ENCODE measurements at regions of chr4 and their contacts with region 1.

Region 1: GRCh38 chr4:111854494-111855087 is 290.7 kb upstream of the FAM241A start:
- DNase-seq: no peak
- H3K4me3 Mint-ChIP-seq: no peak overlapping the region
- H3K27ac Mint-ChIP-seq: no peak overlapping the region
- H3K4me1 Mint-ChIP-seq: no peaks in the 10 kb centered on the region
- H3K27me3 Mint-ChIP-seq: peaks cover 4% of the 10 kb centered on the region

Region 2: GRCh38 chr4:109998867-109999584 is 1855.6 kb before region 1 on chr4:
- intact Hi-C with region 1: loop called (anchors 5 kb)
- DNase-seq: peak; percentile 14
- H3K4me3 Mint-ChIP-seq: no peak overlapping the region
- H3K27ac Mint-ChIP-seq: no peak overlapping the region
- H3K4me1 Mint-ChIP-seq: peaks cover 18% of the 10 kb centered on the region
- H3K27me3 Mint-ChIP-seq: peaks cover 4% of the 10 kb centered on the region

Region 3: GRCh38 chr4:111641955-111642579 is 212.5 kb before region 1 on chr4:
- intact Hi-C with region 1: loop called (anchors 1 kb)
- DNase-seq: peak; percentile 11
- H3K4me3 Mint-ChIP-seq: no peak overlapping the region
- H3K27ac Mint-ChIP-seq: no peak overlapping the region
- H3K4me1 Mint-ChIP-seq: no peaks in the 10 kb centered on the region
- H3K27me3 Mint-ChIP-seq: peaks cover 2% of the 10 kb centered on the region

Region 4: GRCh38 chr4:111788099-111788498 is 66.5 kb before region 1 on chr4:
- intact Hi-C with region 1: no loop called
- DNase-seq: no peak
- H3K4me3 Mint-ChIP-seq: no peak overlapping the region
- H3K27ac Mint-ChIP-seq: no peak overlapping the region
- H3K4me1 Mint-ChIP-seq: no peaks in the 10 kb centered on the region
- H3K27me3 Mint-ChIP-seq: no peaks in the 10 kb centered on the region

Region 5: GRCh38 chr4:112031712-112032328 is 177.2 kb after region 1 on chr4:
- intact Hi-C with region 1: loop called (anchors 10 kb)
- DNase-seq: no peak
- H3K4me3 Mint-ChIP-seq: no peak overlapping the region
- H3K27ac Mint-ChIP-seq: no peak overlapping the region
- H3K4me1 Mint-ChIP-seq: no peaks in the 10 kb centered on the region
- H3K27me3 Mint-ChIP-seq: peaks cover 24% of the 10 kb centered on the region

Region 6: GRCh38 chr4:112514469-112515303 is 660.1 kb after region 1 on chr4:
- intact Hi-C with region 1: no loop called
- DNase-seq: no peak
- H3K4me3 Mint-ChIP-seq: peak overlapping the region; percentile 95
- H3K27ac Mint-ChIP-seq: peak overlapping the region; percentile 69
- H3K4me1 Mint-ChIP-seq: peaks cover 78% of the 10 kb centered on the region
- H3K27me3 Mint-ChIP-seq: peaks cover 81% of the 10 kb centered on the region

Measured in activated T-helper 1 cell treated with anti-CD3 and anti-CD28 coated beads, Interleukin-12 subunit alpha, Interleukin-12 subunit beta, Interleukin-2, Interleukin-4 antibody, amounts not matched to agents 30 ng/mL and 10 ng/mL and 1 ng/mL, durations not matched to agents 14 hours and 24 hours and 36 hours (primary cell).